ENCODE measurements at regions of chr4 and their contacts with region 1.

Region 1: DNA sequence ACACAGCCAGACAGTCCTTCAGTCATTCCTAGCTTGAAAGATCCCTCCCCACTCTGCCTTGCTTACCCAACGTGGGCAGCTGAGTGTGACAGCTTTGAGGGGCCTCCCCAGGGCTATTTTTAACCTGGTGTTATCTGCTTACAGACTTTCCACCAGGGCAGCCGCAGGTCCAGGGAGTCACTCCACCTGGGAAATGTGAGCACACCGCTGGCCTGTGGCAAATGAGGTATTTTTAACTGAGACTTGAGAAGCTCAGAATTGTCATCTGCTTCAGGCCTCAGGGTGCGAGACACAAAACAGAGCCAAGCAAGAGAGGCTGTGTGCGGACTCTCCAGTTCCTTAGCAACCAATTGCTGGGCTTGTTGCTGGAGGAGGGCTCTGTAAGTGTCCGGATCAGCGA is 13.0 kb downstream of the CORIN start:
- DNase-seq: peak; percentile 40 to 73 (median 61)
- ATAC-seq: peak; percentile 87 to 89
- H3K4me3 ChIP-seq: no peak overlapping the region
- H3K27ac ChIP-seq: peak overlapping the region; percentile 87
- H3K4me1 ChIP-seq: no peaks in the 10 kb centered on the region
- H3K27me3 ChIP-seq: no peaks in the 10 kb centered on the region

Region 2: GRCh38 chr4:47762376-47763266 is 62.2 kb before region 1 on chr4:
- intact Hi-C with region 1: loop called in 2 of 4 experiments (anchors 10 kb)
- DNase-seq: no peak
- ATAC-seq: peak; percentile 53 to 63
- H3K4me3 ChIP-seq: no peak overlapping the region
- H3K27ac ChIP-seq: peak overlapping the region; percentile 42
- H3K4me1 ChIP-seq: peaks cover 2% of the 10 kb centered on the region
- H3K27me3 ChIP-seq: no peaks in the 10 kb centered on the region

Measured in right cardiac atrium (tissue), 5 donors.